Heart right ventricle (tissue), 16 donors: ENCODE measurements at regions of chr12 and their contacts with region 1.

Region 1: GRCh38 chr12:30754709-30755394 is at the start of gene CAPRIN2:
- DNase-seq: peak; percentile 94 to 98
- ATAC-seq: peak; percentile 97 to 100 (median 99)
- H3K4me3 ChIP-seq: peak within 1 kb of the TSS; percentile 55 to 94 (median 82)
- H3K27ac ChIP-seq: peak within 1 kb of the TSS; percentile 47 to 92 (median 84)
- H3K4me1 ChIP-seq: peaks cover 5 to 36% (median 22%) of the 10 kb centered on the region in 9 donors
- H3K27me3 ChIP-seq: no peaks in the 10 kb centered on the region
- CTCF ChIP-seq: peak in 8 of 9 donors; percentile 14 to 70 (median 44)
- total RNA-seq, gene CAPRIN2: 22.2 to 33.0 (median 28.9) TPM

Region 2: DNA sequence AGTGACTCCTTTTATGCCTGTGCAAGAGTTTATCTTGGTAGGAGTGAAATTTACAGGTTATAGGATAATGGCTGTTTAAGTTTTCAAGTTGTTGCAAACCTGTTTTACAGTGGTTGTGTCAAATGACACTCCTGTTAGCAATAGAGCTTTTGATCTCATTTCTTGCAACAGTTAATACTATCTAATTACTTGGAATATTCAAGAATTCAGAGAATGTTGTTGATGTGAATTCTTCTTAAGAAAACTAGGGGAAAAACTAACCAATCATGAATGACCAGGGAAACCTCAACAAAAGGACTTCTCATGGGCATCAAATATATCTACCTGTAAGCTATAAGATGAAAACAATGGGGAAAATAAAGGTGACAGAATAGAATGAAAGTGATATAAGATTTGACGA is 144.1 kb before region 1 on chr12:
- intact Hi-C with region 1: no loop called
- DNase-seq: no peak
- ATAC-seq: no peak
- H3K4me3 ChIP-seq: no peak overlapping the region
- H3K27ac ChIP-seq: no peak overlapping the region
- H3K4me1 ChIP-seq: peaks cover 0 to 4% (median 0%) of the 10 kb centered on the region in 9 donors
- H3K27me3 ChIP-seq: no peaks in the 10 kb centered on the region
- CTCF ChIP-seq: no peak

Region 3: GRCh38 chr12:30795410-30796312 is 40.8 kb after region 1 on chr12:
- intact Hi-C with region 1: loop called in 5 of 10 experiments (anchors 5 kb)
- DNase-seq: peak; percentile 51 to 65
- ATAC-seq: peak; percentile 73 to 88 (median 84)
- H3K4me3 ChIP-seq: peak overlapping the region; percentile 51 to 74 (median 66)
- H3K27ac ChIP-seq: peak overlapping the region in 8 of 10 donors; percentile 29 to 91 (median 70)
- H3K4me1 ChIP-seq: peaks cover 4 to 28% (median 16%) of the 10 kb centered on the region in 9 donors
- H3K27me3 ChIP-seq: peaks cover 0 to 37% (median 0%) of the 10 kb centered on the region in 7 donors
- CTCF ChIP-seq: peak in 1 of 9 donors; percentile 18

Region 4: DNA sequence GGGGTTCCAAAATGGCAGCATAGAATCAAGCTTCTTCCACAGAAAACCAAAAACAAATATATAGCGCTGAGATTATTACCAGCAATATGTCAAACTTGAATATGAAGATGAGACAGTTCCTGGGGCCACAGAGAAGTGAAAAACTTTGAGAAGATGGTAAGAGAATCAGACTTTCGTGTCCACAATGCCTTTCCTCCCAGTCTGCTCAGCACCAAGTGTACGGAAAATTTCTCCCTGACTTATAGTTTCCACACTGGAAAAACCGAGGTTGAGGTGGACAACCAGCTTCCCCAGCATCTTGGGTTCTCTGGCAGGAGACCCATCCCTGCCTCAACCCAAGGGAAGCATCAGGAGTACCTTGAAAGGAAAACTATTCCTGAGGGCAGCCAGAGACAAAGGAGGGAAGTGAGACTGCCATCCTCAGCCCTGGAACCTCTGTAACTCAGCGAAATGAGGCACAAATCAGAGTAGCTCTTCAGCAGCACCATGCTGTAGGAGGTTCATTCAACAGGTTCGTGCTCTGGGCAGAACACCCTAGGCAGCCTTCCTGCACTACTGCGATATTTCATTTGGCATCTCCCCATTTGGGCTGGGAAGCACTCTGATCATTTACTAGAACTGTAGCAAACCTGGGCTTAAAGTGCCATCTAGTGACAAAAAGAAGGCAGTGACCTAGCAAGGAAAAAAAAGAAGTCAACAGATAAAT is 52.3 kb after region 1 on chr12:
- intact Hi-C with region 1: loop called in 1 of 10 experiments (anchors 5 kb)
- DNase-seq: peak in 1 of 2 donors; percentile 52
- ATAC-seq: peak; percentile 78 to 94 (median 86)
- H3K4me3 ChIP-seq: no peak overlapping the region
- H3K27ac ChIP-seq: no peak overlapping the region
- H3K4me1 ChIP-seq: peaks cover 0 to 4% (median 0%) of the 10 kb centered on the region in 9 donors
- H3K27me3 ChIP-seq: no peaks in the 10 kb centered on the region
- CTCF ChIP-seq: peak; percentile 57 to 83 (median 80)